ENCODE measurements at regions of chr11 and their contacts with region 1.

Region 1: DNA sequence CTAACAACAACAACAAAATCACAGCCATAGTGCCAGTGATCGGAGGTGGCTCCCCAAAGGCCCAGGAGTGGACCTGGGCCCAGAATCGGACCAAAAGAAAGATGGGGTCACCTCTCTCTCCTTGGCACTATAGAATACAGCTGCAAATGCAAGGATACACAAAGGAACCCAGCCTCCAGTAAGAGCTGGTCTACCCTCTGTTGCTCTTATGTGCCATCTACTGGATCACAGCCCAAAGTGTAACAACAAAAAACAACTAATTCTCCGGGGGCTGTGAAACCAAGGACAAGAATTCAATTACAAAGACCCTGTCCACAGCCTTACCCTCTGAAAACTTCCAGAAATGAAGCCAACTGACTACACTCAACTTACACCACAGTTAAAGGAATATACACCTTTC is 21.6 kb downstream of the OR8G5 start:
- DNase-seq: no peak
- ATAC-seq: no peak
- H3K4me3 ChIP-seq: no peak overlapping the region
- H3K27ac ChIP-seq: no peak overlapping the region
- H3K4me1 ChIP-seq: peaks cover 6 to 13% of the 10 kb centered on the region in 2 experiments
- H3K27me3 ChIP-seq: no peaks in the 10 kb centered on the region
- CTCF ChIP-seq: peak in 2 of 3 experiments; percentile 3 to 30; a peak in 2 of 6 replicates
- EP300 ChIP-seq: no peak
- POLR2A ChIP-seq: no peak
- RAD21 ChIP-seq: peak; percentile 6 to 44; a peak in 2 of 4 replicates

Region 2: DNA sequence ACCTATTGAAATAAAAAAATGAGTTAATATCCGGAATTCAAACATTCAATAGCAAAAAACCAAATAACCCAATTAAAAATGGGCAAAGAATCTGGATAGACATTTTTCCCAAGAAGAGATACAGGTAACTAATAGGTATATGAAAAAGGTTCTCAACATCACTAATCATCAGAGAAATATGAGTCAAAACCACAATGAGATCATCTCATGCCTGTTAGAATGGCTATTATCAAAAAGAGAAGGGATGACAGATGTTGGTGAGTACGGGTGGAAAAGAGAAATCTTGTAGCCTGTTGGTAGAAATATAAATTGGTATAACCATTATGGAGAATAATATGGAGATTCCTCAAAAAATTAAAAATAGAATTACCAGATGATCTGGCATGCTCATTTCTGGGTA is 444.7 kb before region 1 on chr11:
- CTCF ChIA-PET with region 1: no interaction called
- POLR2A ChIA-PET with region 1: no interaction called
- in situ Hi-C with region 1: no loop called
- intact Hi-C with region 1: no loop called
- DNase-seq: no peak
- ATAC-seq: no peak
- H3K4me3 ChIP-seq: no peak overlapping the region
- H3K27ac ChIP-seq: no peak overlapping the region
- H3K4me1 ChIP-seq: no peaks in the 10 kb centered on the region
- H3K27me3 ChIP-seq: peaks cover 0 to 4% of the 10 kb centered on the region in 2 experiments; a peak in 1 of 5 replicates
- CTCF ChIP-seq: no peak
- EP300 ChIP-seq: no peak
- POLR2A ChIP-seq: no peak
- RAD21 ChIP-seq: no peak

Region 3: GRCh38 chr11:124108156-124108555 is 169.6 kb before region 1 on chr11:
- CTCF ChIA-PET with region 1: no interaction called
- POLR2A ChIA-PET with region 1: no interaction called
- in situ Hi-C with region 1: no loop called
- intact Hi-C with region 1: loop called (anchors 2 kb)
- DNase-seq: peak; percentile 29 to 76 (median 46)
- ATAC-seq: peak; percentile 93
- H3K4me3 ChIP-seq: no peak overlapping the region
- H3K27ac ChIP-seq: no peak overlapping the region
- H3K4me1 ChIP-seq: no peaks in the 10 kb centered on the region; a peak in 1 of 5 replicates
- H3K27me3 ChIP-seq: no peaks in the 10 kb centered on the region
- CTCF ChIP-seq: peak; percentile 55 to 65 (median 62)
- EP300 ChIP-seq: 0 out of 2 replicates have a peak, but pooled peaks have one; percentile 15
- POLR2A ChIP-seq: no peak
- RAD21 ChIP-seq: peak; percentile 74 to 90

Region 4: DNA sequence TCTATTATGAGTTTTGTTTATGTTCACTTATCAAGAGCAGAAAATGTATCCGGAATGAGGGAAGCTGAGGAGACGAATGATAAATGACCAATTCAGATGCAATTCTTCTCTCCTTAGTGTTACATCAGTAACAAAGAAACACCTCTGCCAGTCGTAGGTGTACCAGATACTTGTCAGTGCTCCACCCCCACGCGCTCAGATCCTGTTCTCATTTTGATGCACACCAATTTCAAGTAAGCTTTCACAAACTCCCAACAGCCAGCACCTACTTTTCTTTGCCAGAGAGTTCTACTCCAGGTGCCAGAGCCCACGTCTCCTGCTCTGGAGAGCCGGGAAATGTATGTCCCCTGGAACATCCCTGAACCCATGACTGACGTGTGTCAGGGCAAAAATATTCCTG is 221.9 kb after region 1 on chr11:
- CTCF ChIA-PET with region 1: no interaction called
- POLR2A ChIA-PET with region 1: no interaction called
- in situ Hi-C with region 1: no loop called
- intact Hi-C with region 1: no loop called
- DNase-seq: no peak
- ATAC-seq: no peak
- H3K4me3 ChIP-seq: no peak overlapping the region
- H3K27ac ChIP-seq: no peak overlapping the region
- H3K4me1 ChIP-seq: no peaks in the 10 kb centered on the region
- H3K27me3 ChIP-seq: no peaks in the 10 kb centered on the region
- CTCF ChIP-seq: no peak
- EP300 ChIP-seq: no peak
- POLR2A ChIP-seq: no peak
- RAD21 ChIP-seq: no peak